CD14-positive monocyte (primary cell): ENCODE measurements at regions of chr4 and their contacts with region 1.

Region 1: DNA sequence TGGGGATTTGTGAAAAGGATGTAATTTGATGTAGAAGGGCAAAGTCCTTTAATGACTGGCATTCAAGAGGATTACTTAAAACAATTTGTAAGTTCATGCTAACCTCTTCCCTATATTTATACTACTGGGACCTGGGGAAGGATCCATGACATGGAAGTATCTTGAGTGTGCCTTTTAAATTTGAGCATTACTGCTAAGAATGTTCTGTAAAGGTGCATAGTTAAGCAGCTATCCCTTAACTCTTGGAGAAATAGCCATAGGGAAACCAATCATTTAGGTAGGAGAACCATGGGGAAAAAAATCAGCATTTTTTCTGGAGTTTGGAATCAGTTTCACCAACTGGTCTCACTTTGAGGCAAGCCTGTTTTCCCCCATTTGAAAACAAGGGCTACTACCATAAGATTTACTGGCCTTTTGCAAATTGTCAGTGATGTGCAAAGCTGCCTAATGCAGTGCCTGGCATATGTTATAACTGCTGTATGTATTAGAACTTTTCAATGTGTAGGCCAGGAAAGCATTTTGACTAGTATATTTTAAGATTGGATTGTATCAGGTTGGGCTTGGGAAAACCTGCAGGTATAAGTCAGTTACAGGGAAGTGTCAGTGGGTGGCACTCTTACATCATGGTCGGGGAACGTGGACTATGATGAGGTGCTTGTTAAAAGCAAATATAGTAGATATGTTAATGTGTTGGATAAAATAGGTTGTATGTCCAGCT is 72.1 kb downstream of the PRSS12 start:
- DNase-seq: peak; percentile 28 to 46 (median 45)
- H3K4me3 ChIP-seq: no peak overlapping the region
- H3K4me3 Mint-ChIP-seq: no peak overlapping the region
- H3K27ac ChIP-seq: no peak overlapping the region
- H3K27ac Mint-ChIP-seq: no peak overlapping the region
- H3K4me1 ChIP-seq: peaks cover 30 to 37% of the 10 kb centered on the region in 2 donors
- H3K4me1 Mint-ChIP-seq: peaks cover 48% of the 10 kb centered on the region
- H3K27me3 ChIP-seq: no peaks in the 10 kb centered on the region
- H3K27me3 Mint-ChIP-seq: no peaks in the 10 kb centered on the region
- CTCF ChIP-seq: peak; percentile 45

Region 2: GRCh38 chr4:118352843-118353533 is 72.3 kb after region 1 on chr4 and contains the start of gene PRSS12:
- intact Hi-C with region 1: loop called in 1 of 2 experiments (anchors 5 kb)
- DNase-seq: peak; percentile 28 to 58 (median 44)
- H3K4me3 ChIP-seq: peak within 1 kb of the TSS in 2 of 3 experiments; percentile 24 to 59
- H3K4me3 Mint-ChIP-seq: peak within 1 kb of the TSS; percentile 61 to 88
- H3K27ac ChIP-seq: no peak within 1 kb of the TSS
- H3K27ac Mint-ChIP-seq: peak within 1 kb of the TSS in 2 of 7 donors; percentile 4 to 41
- H3K4me1 ChIP-seq: peaks cover 10 to 16% of the 10 kb centered on the region in 2 donors
- H3K4me1 Mint-ChIP-seq: peaks cover 12% of the 10 kb centered on the region
- H3K27me3 ChIP-seq: peaks cover 40 to 63% of the 10 kb centered on the region in 2 donors
- H3K27me3 Mint-ChIP-seq: peaks cover 61 to 80% (median 74%) of the 10 kb centered on the region in 3 donors
- CTCF ChIP-seq: peak; percentile 86
- polyA plus RNA-seq, gene PRSS12: not detected